OCI-LY7 (cell line): ENCODE measurements at regions of chr19 and their contacts with region 1.

Region 1: DNA sequence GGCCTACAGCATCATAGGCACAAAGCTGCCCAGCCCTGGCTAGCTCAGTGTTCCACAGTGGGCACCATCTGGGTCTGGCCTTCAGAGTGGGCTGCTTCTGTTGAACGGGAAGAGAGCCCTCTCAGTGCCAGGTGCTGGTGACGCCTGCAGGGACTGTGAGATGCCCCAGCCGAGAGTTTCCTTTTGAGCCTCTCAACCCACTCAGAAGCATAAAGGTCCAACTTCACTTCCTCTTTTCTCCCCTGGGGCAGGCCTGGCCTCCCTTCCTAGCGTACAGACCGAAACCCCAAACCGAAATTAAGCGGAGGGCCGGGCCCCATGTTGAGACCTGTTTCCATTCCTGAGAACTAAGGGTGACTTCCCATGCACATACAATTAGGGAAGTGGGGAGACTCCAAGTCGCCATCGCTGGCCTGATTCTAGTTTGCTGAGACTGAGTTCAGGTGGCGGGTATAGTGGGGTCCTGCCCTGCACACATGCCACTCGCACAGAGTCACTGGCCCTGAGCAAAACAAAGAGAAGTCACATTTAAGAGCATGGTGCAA is 6.9 kb downstream of the RAB8A start:
- DNase-seq: peak; percentile 96
- H3K4me3 ChIP-seq: peak overlapping the region; percentile 54
- H3K27ac ChIP-seq: peak overlapping the region; percentile 99
- H3K4me1 ChIP-seq: peaks cover 65% of the 10 kb centered on the region
- CTCF ChIP-seq: no peak

Region 2: GRCh38 chr19:15944401-15944800 is 174.2 kb before region 1 on chr19:
- CTCF ChIA-PET with region 1: no interaction called
- POLR2A ChIA-PET with region 1: no interaction called
- intact Hi-C with region 1: no loop called
- DNase-seq: no peak
- H3K4me3 ChIP-seq: no peak overlapping the region
- H3K27ac ChIP-seq: no peak overlapping the region
- H3K4me1 ChIP-seq: no peaks in the 10 kb centered on the region
- CTCF ChIP-seq: no peak

Region 3: DNA sequence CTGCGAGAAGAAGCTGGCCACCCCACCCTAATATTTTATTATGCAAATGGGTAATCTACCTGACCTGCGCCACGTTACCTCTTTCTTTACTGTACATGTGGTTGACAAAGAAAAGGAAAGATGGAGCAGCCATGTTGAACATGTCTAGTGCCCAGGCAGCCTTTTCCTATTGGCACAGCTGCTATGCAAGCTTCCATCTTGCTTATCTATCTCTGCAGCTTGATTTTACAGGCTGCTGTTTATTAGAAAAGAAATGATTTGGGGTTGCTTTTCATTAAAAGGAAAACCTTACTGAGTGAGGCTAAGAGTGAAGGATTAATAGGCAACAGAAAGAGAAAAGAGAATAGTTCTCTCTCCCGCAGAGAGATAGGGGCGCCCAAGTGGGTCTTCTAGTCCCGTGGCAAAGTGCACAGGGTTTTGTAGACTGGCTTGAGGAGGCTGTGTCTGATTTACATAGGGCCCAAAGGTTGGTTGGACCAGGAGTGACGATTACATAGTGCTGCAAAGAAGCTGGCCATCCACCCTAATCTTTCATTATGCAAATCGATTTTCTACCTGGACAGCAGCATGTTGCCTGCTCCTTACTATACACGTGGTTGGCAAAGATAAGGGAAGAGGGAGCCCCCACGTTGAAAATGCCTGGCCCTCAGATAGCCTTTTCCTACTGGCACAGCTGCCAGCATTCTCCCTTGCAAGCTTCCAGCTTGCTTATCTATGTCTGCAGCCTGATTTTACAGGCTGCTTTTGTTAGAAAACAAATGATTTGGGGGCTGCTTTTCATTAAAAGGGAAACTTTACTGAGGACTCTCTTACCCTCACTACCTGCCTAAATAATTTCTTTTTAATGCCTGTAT is 141.5 kb before region 1 on chr19:
- CTCF ChIA-PET with region 1: no interaction called
- POLR2A ChIA-PET with region 1: no interaction called
- intact Hi-C with region 1: no loop called
- DNase-seq: no peak
- H3K4me3 ChIP-seq: no peak overlapping the region
- H3K27ac ChIP-seq: no peak overlapping the region
- H3K4me1 ChIP-seq: no peaks in the 10 kb centered on the region
- CTCF ChIP-seq: no peak

Region 4: DNA sequence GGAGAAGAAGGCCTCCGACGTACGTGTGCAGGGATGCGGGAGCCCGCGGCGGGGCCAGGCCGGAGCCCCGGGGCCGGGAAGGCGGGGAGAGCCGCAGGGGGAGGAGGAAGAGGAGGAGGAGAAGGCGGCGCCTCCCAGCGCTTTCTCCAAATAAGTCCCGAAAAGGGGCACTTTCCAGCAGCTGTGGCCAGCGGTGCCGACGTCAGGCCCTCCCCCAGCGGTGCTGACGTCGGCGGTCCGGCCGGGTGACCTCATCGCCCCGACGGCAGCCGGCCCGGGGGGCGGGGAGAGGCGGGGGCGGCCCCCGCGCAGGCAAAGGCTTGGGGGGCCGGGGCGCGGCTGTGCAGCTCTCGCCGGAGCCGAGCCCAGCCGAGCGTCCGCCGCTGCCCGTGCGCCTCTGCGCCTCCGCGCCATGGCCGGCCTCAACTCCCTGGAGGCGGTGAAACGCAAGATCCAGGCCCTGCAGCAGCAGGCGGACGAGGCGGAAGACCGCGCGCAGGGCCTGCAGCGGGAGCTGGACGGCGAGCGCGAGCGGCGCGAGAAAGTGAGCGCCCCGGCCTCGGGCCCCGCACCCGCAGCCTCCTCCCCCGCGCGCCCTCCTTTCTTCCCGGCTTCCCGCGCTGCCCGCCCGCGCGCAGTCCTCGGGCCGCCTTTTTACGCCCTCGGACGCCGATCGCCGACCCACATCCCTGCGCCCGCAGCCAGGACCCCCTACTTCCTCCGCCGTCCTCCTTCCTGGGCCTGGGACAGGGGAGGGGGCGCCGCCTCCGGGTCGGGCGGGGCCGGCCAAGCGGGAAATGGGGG is 42.2 kb before region 1 on chr19 and contains the start of gene TPM4:
- CTCF ChIA-PET with region 1: interaction called, 7 read pairs
- POLR2A ChIA-PET with region 1: interaction called, 3 read pairs
- intact Hi-C with region 1: loop called (anchors 2 kb)
- DNase-seq: peak; percentile 67
- H3K4me3 ChIP-seq: peak within 1 kb of the TSS; percentile 80
- H3K27ac ChIP-seq: peak within 1 kb of the TSS; percentile 96
- H3K4me1 ChIP-seq: peaks cover 56% of the 10 kb centered on the region
- CTCF ChIP-seq: no peak
- total RNA-seq, gene TPM4: 111 and 134 TPM in 2 replicates

Region 5: GRCh38 chr19:16143399-16144245 is 25.1 kb after region 1 on chr19 and contains the start of gene HSH2D:
- CTCF ChIA-PET with region 1: no interaction called
- POLR2A ChIA-PET with region 1: interaction called, 16 read pairs
- intact Hi-C with region 1: loop called (anchors 1 kb)
- DNase-seq: peak; percentile 97
- H3K4me3 ChIP-seq: peak within 1 kb of the TSS; percentile 76
- H3K27ac ChIP-seq: peak within 1 kb of the TSS; percentile 81
- H3K4me1 ChIP-seq: peaks cover 70% of the 10 kb centered on the region
- CTCF ChIP-seq: no peak
- total RNA-seq, gene HSH2D: 52.4 and 57.6 TPM in 2 replicates

Region 6: GRCh38 chr19:16197622-16198369 is 79.2 kb after region 1 on chr19 and contains the start of gene AP1M1:
- CTCF ChIA-PET with region 1: no interaction called
- POLR2A ChIA-PET with region 1: no interaction called
- intact Hi-C with region 1: no loop called
- DNase-seq: peak; percentile 98
- H3K4me3 ChIP-seq: peak within 1 kb of the TSS; percentile 89
- H3K27ac ChIP-seq: peak within 1 kb of the TSS; percentile 54
- H3K4me1 ChIP-seq: peaks cover 24% of the 10 kb centered on the region
- CTCF ChIP-seq: no peak
- total RNA-seq, gene AP1M1: 68.4 and 92.9 TPM in 2 replicates